Calu3 (cell line): ENCODE measurements at regions of chr11 and their contacts with region 1.

Region 1: GRCh38 chr11:36312611-36313472 is 16.8 kb downstream of the PRR5L start:
- DNase-seq: peak; percentile 22
- H3K4me3 Mint-ChIP-seq: no peak overlapping the region
- H3K27ac Mint-ChIP-seq: no peak overlapping the region
- H3K4me1 Mint-ChIP-seq: peaks cover 46% of the 10 kb centered on the region
- H3K27me3 Mint-ChIP-seq: peaks cover 32% of the 10 kb centered on the region
- CTCF ChIP-seq: no peak

Region 2: GRCh38 chr11:36349351-36350136 is 36.7 kb after region 1 on chr11:
- CTCF ChIA-PET with region 1: no interaction called
- intact Hi-C with region 1: loop called (anchors 5 kb)
- DNase-seq: no peak
- H3K4me3 Mint-ChIP-seq: no peak overlapping the region
- H3K27ac Mint-ChIP-seq: no peak overlapping the region
- H3K4me1 Mint-ChIP-seq: peaks cover 10% of the 10 kb centered on the region
- H3K27me3 Mint-ChIP-seq: peaks cover 53% of the 10 kb centered on the region
- CTCF ChIP-seq: no peak

Region 3: GRCh38 chr11:36361901-36362391 is 49.1 kb after region 1 on chr11:
- CTCF ChIA-PET with region 1: no interaction called
- intact Hi-C with region 1: loop called (anchors 5 kb)
- DNase-seq: no peak
- H3K4me3 Mint-ChIP-seq: peak overlapping the region; percentile 64
- H3K27ac Mint-ChIP-seq: no peak overlapping the region
- H3K4me1 Mint-ChIP-seq: peaks cover 32% of the 10 kb centered on the region
- H3K27me3 Mint-ChIP-seq: peaks cover 22% of the 10 kb centered on the region
- CTCF ChIP-seq: no peak